ENCODE measurements at regions of chr2 and their contacts with region 1.

Region 1: GRCh38 chr2:217810260-217810659 is 192.5 kb downstream of the TNS1 start:
- DNase-seq: no peak
- H3K4me3 ChIP-seq: no peak overlapping the region
- H3K27ac ChIP-seq: no peak overlapping the region
- H3K4me1 ChIP-seq: no peaks in the 10 kb centered on the region
- H3K27me3 ChIP-seq: no peaks in the 10 kb centered on the region
- CTCF ChIP-seq: no peak
- EP300 ChIP-seq: no peak
- POLR2A ChIP-seq: no peak
- RAD21 ChIP-seq: no peak

Region 2: GRCh38 chr2:217822296-217823252 is 12.3 kb after region 1 on chr2:
- CTCF ChIA-PET with region 1: interaction called, 13 read pairs
- POLR2A ChIA-PET with region 1: interaction called, 3 read pairs
- DNase-seq: no peak
- H3K4me3 ChIP-seq: no peak overlapping the region
- H3K27ac ChIP-seq: no peak overlapping the region
- H3K4me1 ChIP-seq: peaks cover 0 to 3% (median under 1%) of the 10 kb centered on the region in 4 experiments; a peak in 1 of 7 replicates
- H3K27me3 ChIP-seq: no peaks in the 10 kb centered on the region
- CTCF ChIP-seq: peak; percentile 36 to 45 (median 40)
- EP300 ChIP-seq: no peak
- POLR2A ChIP-seq: no peak
- RAD21 ChIP-seq: no peak; a peak in 1 of 4 replicates